Dendritic cell treated with granulocyte-macrophage colony-stimulating factor and Interleukin-4, amounts not matched to agents 40 ng/mL and 50 ng/mL, for 4 days (primary cell): ENCODE measurements at regions of chr1 and their contacts with region 1.

Region 1: DNA sequence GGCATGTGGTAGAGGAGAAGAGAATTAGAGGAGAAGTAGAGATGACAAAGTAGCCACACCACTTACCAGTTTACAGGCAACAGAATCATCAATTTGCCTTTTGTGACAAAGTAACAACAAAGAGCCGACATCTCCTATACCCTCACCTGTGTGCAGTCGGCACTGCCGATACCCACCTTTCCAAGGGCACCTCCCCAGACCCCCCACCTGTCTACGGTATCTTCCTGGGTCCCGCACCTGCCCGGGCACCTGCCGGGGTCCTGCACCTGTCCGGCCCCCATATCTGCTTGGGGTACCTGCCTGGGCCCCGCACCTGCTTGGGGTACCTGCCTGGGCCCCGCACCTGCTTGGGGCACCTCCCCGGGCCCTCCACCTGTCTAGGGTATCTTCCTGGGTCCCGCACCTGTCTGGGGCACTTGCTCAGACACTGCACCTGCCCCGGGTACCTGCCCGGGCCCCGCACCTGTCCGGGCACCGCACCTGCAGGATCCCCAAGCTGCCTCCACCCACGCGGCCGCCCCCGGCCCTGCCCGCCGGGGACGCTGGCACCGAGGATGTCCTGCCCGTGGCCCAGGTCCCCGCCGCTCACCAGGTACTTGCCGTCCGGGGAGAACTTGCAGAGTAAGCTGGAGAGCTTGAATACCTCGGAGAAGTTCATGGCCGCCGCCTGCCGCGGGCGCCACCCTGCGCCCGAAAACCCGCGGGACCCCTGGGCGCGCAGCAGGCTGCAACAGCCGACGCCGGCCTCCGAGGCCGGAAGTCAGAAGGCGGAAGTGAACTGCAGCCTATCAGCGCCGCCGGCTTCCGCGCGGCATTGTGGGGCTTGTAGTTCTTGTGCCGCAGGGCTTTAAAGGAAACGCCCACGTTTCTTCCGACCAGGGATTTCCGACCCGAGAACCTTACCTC is at the start of gene WRAP73:
- H3K4me3 Mint-ChIP-seq: peak within 1 kb of the TSS; percentile 81
- H3K27ac Mint-ChIP-seq: peak within 1 kb of the TSS; percentile 76
- H3K4me1 Mint-ChIP-seq: peaks cover 35% of the 10 kb centered on the region
- H3K27me3 Mint-ChIP-seq: peaks cover 39% of the 10 kb centered on the region

Region 2: DNA sequence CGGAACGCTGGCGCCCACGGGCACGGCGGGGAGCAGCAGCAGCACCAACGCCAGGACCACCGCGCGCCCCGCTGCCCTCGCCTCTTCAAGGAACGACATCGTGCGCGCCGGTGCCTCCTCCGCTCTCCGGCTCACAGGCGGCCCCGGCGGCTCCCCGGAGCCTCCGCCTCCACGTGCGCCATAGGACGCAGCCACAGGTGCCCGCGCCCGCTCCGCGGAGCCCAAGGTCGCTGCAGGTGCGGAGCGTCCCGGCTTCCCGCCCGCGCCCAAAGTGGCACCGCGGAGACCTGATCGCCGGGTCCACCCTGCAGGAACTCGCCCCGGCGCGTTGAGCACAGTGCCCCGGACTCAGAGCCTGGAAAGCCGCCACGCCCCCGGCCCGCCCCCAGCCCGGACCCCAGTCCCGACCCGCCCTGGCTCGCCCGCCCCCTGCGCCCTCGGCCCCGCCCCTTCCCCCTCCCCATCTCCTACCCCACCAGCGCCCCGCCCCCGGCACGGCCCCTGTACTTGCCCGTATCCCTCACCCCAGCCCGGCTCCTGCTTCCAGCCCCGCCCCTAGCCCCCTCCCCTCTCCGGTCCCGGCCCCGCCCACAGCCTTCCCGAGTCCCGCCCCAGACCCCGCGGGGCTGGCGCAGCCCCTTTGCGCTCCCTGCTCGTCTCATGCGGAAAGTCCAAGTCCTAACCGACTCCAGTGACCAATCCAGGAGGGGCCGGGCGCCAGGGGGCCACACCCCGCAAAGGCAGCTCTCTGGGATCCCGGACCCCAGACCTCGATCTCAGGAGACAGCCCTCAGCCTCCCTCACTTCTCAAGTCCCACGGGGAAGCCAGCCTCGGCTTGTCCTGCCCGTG is 38.2 kb before region 1 on chr1 and contains the start of gene MEGF6:
- intact Hi-C with region 1: no loop called
- H3K4me3 Mint-ChIP-seq: peak within 1 kb of the TSS; percentile 79
- H3K27ac Mint-ChIP-seq: no peak within 1 kb of the TSS
- H3K4me1 Mint-ChIP-seq: peaks cover 26% of the 10 kb centered on the region
- H3K27me3 Mint-ChIP-seq: peaks cover 52% of the 10 kb centered on the region

Region 3: GRCh38 chr1:3624200-3625136 is 25.1 kb before region 1 on chr1 and contains the start of gene TPRG1L:
- intact Hi-C with region 1: loop called (anchors 1 kb)
- H3K4me3 Mint-ChIP-seq: peak within 1 kb of the TSS; percentile 97
- H3K27ac Mint-ChIP-seq: peak within 1 kb of the TSS; percentile 81
- H3K4me1 Mint-ChIP-seq: peaks cover 44% of the 10 kb centered on the region
- H3K27me3 Mint-ChIP-seq: peaks cover 10% of the 10 kb centered on the region